ENCODE measurements at regions of chr1 and their contacts with region 1.

Region 1: GRCh38 chr1:29230553-29231378 is at the start of gene MECR:
- DNase-seq: peak; percentile 90
- H3K4me3 ChIP-seq: peak within 1 kb of the TSS; percentile 90
- H3K27ac ChIP-seq: peak within 1 kb of the TSS; percentile 61
- H3K27me3 ChIP-seq: no peaks in the 10 kb centered on the region
- CTCF ChIP-seq: peak; percentile 34

Region 2: DNA sequence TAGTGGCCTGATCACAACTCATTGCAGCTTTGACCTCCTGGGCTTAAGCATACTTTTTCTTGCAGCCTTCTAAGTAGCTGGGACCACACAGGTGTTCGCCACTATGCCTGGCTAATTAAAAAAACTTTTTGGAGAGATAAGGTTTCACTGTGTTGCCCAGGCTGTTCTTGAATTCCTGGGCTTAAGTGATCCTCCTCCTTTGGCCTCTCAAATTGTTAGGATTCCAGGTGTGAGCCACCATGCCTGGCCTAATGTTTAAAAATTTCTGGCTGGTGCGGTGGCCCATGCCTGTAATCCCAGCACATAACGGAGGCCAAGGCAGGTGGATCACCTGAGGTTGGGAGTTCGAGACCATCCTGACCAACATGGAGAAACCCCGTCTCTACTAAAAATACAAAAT is 469.6 kb before region 1 on chr1:
- in situ Hi-C with region 1: no loop called
- DNase-seq: no peak
- H3K4me3 ChIP-seq: no peak overlapping the region
- H3K27ac ChIP-seq: no peak overlapping the region
- H3K27me3 ChIP-seq: no peaks in the 10 kb centered on the region
- CTCF ChIP-seq: no peak

Region 3: DNA sequence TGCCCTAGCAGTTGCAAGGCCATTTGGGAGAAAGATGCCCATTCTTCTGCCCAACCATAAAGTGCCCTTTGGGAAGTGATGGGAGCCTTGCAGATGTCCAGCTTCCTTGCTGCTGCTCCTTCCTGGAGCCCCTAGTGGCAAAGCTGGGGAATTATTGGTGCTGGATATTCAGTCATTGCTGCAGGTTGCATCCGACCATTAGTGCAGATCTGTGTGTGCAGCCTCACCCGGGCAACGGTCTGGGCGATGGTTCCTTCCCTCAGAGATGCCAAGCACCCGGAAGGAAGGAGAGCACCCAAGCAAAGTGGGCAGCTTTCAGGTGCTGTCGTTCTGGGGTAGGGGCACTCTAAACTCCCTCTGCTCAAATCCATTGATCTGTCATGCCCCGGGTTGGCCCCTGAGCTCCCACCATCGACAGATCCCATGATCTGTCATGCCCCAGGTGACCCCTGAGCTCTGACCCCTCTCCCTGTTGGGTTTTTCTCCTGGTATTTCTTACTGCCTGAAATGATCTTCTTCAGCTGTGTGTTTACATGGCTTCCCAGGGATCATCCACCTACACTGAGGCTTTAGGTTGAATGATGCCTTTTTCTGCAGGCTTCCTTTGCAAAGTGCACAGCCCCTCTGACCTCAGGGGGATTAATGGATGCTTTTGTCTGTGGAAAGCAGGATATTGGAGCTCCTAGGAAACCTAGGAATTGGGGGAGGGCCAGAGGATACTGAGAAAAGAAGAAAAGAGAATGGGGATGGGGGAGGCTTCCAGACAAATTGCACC is 473.0 kb after region 1 on chr1:
- in situ Hi-C with region 1: loop called (anchors 25 kb)
- DNase-seq: peak; percentile 42
- H3K4me3 ChIP-seq: no peak overlapping the region
- H3K27ac ChIP-seq: no peak overlapping the region
- H3K27me3 ChIP-seq: no peaks in the 10 kb centered on the region
- CTCF ChIP-seq: peak; percentile 91

Region 4: GRCh38 chr1:30684881-30685795 is 1454.4 kb after region 1 on chr1:
- in situ Hi-C with region 1: loop called (anchors 25 kb)
- DNase-seq: no peak
- H3K4me3 ChIP-seq: no peak overlapping the region
- H3K27ac ChIP-seq: no peak overlapping the region
- H3K27me3 ChIP-seq: peaks cover 38% of the 10 kb centered on the region
- CTCF ChIP-seq: no peak

Measured in brain microvascular endothelial cell (primary cell).